Activated B cell treated with CpG ODN at 0.5 μM for 24 hours (primary cell): ENCODE measurements at regions of chr1 and their contacts with region 1.

Region 1: GRCh38 chr1:155540000-155540874 is 22.4 kb downstream of the ASH1L start:
- DNase-seq: no peak
- ATAC-seq: no peak
- H3K4me3 Mint-ChIP-seq: no peak overlapping the region
- H3K27ac Mint-ChIP-seq: peak overlapping the region; percentile 57
- H3K4me1 Mint-ChIP-seq: peaks cover 52% of the 10 kb centered on the region
- H3K27me3 Mint-ChIP-seq: no peaks in the 10 kb centered on the region
- CTCF ChIP-seq: no peak

Region 2: DNA sequence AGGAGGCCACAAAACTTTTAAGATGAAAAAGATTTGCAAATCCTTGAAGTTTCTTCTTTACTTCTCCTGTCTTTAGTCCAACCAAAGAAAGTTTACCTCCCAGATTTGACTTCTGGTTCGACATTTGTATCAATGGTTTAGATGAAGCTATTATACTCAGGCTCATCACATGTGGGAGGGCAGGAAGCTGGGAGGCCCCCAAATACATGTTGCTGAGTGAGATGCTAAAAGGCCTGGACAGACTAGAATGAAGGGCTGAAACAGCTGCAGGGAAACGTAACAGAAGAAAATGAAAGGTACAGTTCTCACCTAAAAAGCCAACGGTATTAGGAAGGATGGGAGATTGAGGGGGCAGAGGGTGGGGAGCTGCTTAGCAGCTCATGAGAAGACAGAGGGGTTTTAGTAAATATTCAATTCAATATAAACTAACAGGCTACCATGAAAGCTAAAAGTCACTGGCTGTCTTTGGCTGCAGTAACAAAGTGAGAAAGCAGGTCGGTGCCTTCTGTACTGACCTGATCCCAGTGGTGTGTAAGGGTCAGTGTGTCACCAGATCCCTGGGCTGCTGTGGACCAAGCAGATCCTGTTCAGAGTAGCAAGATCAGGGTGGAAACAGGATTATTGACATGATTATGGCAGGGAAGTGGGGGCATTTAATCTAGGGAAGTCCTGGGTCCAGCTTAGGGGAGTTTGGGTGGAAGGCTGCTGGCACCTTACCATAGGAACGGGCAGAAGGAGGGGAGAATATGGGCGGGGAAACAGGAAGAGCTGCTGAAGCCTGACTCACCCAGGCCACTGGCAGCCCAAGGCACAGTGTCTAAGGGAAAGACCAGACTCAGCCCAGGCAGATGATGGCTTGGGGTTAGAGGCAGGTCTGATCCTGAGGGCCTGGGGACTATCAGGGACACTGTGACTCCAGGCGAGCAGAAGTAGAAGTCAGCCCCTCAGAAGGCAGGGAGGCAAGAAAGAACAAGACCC is 730.5 kb before region 1 on chr1:
- CTCF ChIA-PET with region 1: no interaction called
- POLR2A ChIA-PET with region 1: interaction called, 11 read pairs
- intact Hi-C with region 1: no loop called
- DNase-seq: no peak
- ATAC-seq: no peak
- H3K4me3 Mint-ChIP-seq: no peak overlapping the region
- H3K27ac Mint-ChIP-seq: no peak overlapping the region
- H3K4me1 Mint-ChIP-seq: peaks cover 13% of the 10 kb centered on the region
- H3K27me3 Mint-ChIP-seq: peaks cover 27% of the 10 kb centered on the region
- CTCF ChIP-seq: no peak